ENCODE measurements at regions of chr17 and their contacts with region 1.

Region 1: GRCh38 chr17:39980351-39981206 is at the start of gene PSMD3:
- DNase-seq: peak; percentile 100
- total RNA-seq, gene PSMD3: 125 and 129 TPM in 2 replicates

Region 2: GRCh38 chr17:40098846-40099618 is 118.5 kb after region 1 on chr17:
- in situ Hi-C with region 1: loop called (anchors 25 kb)
- DNase-seq: peak; percentile 99